Dendritic cell treated with granulocyte-macrophage colony-stimulating factor and Interleukin-4, amounts not matched to agents 40 ng/mL and 50 ng/mL, for 4 days (primary cell): ENCODE measurements at regions of chr10 and their contacts with region 1.

Region 1: GRCh38 chr10:14191871-14192270 is 138.9 kb downstream of the FRMD4A start:
- H3K4me3 Mint-ChIP-seq: no peak overlapping the region
- H3K27ac Mint-ChIP-seq: no peak overlapping the region
- H3K4me1 Mint-ChIP-seq: no peaks in the 10 kb centered on the region
- H3K27me3 Mint-ChIP-seq: peaks cover 26% of the 10 kb centered on the region

Region 2: DNA sequence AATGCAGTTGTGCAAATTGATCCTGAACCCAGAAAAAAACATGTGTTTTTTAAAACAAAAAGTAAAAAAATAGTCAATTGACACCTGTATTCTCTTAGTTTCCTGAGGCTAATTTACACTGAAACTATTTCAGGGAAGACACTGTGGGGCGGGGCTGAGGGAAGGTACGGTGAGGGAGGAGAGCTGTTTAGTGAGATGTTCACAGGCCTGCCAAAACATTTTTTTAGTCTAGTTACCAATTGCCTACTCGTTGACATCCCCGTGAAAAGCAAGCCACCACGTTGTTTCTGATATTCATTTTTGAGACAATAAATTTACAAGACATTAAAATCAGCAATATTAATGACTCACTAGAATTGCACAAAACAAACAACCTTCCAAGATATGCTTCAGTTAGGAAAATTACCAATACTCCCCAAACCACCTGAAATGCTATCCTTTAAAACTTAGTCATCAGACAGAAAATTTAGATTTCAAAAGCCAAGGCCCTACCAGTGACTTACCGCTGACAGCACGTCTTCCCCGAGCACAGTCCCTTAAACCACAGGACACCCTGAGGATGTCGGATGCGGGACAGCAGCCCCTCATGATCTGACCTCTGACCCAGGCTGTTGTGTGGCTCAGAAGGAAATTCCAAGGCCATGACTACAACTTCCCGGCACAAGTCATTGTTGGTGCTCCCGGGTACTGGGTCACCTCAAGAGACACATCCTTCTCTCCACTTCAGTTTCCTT is 325.9 kb before region 1 on chr10:
- intact Hi-C with region 1: no loop called
- H3K4me3 Mint-ChIP-seq: no peak overlapping the region
- H3K27ac Mint-ChIP-seq: no peak overlapping the region
- H3K4me1 Mint-ChIP-seq: peaks cover 8% of the 10 kb centered on the region
- H3K27me3 Mint-ChIP-seq: peaks cover 20% of the 10 kb centered on the region

Region 3: DNA sequence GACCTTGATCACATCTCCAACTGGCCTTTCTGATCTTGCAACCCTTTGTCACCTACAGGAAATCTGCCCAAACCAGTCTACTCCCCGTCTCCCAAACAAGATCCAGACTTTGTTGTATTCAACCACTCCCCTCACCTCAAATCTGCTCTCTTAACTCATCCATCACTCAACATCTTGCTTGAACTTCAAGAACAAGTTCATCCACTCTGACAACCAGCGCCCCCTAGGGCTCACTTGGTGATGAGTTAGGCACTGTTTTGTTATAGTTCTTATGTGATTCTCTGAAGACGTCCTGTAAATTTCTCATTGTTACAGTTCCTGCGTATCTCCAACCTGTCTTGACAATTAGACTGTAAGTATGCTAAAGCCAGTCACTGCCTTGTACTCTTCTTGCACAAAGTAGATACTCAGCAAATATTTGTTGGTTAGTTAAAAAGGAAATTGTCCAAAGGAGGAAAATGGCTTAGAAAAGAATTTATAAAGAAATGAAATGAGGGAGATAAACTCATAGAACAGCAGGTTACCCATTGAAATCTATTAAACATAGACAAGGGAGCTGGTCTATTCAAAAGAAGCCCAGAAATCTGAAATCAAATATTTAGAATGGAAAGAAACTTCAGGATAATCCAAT is 133.6 kb after region 1 on chr10:
- intact Hi-C with region 1: loop called (anchors 2 kb)
- H3K4me3 Mint-ChIP-seq: no peak overlapping the region
- H3K27ac Mint-ChIP-seq: no peak overlapping the region
- H3K4me1 Mint-ChIP-seq: peaks cover 5% of the 10 kb centered on the region
- H3K27me3 Mint-ChIP-seq: peaks cover 20% of the 10 kb centered on the region

Region 4: DNA sequence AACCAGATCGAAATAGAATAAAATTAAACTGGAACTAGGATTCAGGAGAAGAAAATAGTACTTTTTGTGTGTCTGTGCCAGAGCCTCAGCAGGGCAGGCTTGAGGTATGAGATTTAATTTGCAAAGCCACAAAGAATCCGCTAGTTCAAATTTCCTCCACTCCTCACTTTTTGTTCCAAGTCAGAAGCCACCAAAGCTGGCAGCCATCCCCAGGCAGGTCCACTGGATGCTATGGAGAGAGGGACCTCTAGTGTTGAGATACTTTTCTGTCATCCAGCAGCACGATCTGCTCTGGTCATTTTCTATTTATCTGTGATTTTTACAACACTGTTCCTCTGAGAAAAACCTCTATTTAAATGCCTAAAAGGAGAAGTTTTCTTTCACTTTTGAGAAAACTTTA is 286.7 kb after region 1 on chr10:
- intact Hi-C with region 1: loop called (anchors 10 kb)
- H3K4me3 Mint-ChIP-seq: no peak overlapping the region
- H3K27ac Mint-ChIP-seq: no peak overlapping the region
- H3K4me1 Mint-ChIP-seq: no peaks in the 10 kb centered on the region
- H3K27me3 Mint-ChIP-seq: peaks cover 29% of the 10 kb centered on the region